ENCODE measurements at regions of chr3 and their contacts with region 1.

Region 1: DNA sequence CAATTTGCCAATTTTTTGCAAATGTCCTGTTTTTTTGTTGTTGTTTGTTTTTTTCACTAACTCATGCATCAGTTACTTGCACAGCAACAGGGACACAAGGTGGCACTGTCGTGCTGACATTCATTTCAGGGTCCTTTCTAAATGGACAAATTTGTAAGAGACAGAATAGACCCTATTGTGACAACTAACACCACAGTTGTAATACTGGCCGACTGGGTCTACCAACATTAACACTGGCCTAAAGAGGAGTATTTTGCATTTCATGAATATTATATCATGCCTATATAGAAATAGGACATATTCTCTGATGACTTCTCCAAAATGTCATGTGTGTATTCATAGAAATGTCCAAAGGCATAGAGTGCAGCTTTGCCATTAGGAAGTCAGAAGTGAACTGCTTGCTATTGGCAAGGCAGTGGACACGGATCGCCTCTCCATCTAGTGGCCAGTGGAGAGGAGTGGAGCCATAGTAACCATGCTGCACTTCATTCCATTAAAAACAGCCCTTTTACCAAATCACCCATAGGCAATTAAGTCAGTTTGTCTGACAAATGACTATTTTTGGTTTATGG is 54.8 kb downstream of the ZBTB20 start:
- DNase-seq: peak; percentile 66 to 67
- H3K4me3 ChIP-seq: no peak overlapping the region
- H3K4me1 ChIP-seq: peaks cover 10% of the 10 kb centered on the region
- H3K27me3 ChIP-seq: no peaks in the 10 kb centered on the region

Region 2: DNA sequence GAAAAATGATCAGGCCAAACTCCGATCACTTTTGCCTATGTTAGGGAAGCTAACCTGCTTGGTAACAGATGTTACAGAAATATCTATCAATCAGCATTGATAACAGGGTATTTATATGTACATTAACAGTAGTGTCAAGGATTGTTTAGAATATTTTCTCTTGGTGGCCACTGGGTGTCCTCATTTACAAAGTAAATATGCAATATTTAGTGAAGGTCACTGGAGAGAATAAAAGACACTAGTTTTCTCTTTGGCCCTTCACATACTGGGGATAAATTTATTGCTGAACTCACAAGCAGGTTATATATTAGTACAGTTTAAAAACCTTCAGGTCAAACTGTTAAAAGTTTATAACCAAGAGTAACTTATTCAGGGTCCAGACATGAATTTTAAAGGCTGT is 729.5 kb before region 1 on chr3:
- in situ Hi-C with region 1: loop called (anchors 25 kb)
- DNase-seq: peak in 1 of 2 experiments; percentile 79
- H3K4me3 ChIP-seq: no peak overlapping the region
- H3K4me1 ChIP-seq: peaks cover 15% of the 10 kb centered on the region
- H3K27me3 ChIP-seq: no peaks in the 10 kb centered on the region

Region 3: DNA sequence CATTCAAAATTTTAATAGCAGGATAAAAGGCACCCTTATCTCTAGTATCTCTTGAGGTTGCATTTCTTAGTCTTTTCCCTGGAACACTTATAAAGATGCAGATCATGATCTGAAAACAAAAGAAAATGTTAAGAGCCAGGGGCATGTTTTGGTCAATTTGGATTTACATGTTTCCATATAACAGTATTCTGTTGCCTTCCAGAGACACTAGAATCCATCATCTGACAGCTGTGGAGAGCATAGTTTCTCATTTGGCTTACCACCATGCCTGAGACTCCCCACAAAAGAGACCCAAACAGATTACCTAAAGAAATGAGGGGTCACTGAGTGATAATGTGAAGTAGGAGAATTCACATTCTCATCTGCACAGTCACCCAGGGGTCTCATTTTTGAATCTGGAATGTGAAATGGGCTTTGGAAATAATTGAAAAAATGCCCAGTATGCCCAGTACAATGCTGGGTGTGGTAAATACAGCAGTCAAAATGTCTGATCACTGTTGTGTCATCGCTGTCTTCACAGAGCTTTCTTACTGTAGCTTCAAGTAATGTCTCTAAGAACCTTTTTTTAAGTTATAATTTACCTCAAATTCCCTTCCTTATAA is 134.6 kb after region 1 on chr3:
- in situ Hi-C with region 1: no loop called
- DNase-seq: peak in 1 of 2 experiments; percentile 33
- H3K4me3 ChIP-seq: no peak overlapping the region
- H3K4me1 ChIP-seq: peaks cover 17% of the 10 kb centered on the region
- H3K27me3 ChIP-seq: no peaks in the 10 kb centered on the region

Region 4: DNA sequence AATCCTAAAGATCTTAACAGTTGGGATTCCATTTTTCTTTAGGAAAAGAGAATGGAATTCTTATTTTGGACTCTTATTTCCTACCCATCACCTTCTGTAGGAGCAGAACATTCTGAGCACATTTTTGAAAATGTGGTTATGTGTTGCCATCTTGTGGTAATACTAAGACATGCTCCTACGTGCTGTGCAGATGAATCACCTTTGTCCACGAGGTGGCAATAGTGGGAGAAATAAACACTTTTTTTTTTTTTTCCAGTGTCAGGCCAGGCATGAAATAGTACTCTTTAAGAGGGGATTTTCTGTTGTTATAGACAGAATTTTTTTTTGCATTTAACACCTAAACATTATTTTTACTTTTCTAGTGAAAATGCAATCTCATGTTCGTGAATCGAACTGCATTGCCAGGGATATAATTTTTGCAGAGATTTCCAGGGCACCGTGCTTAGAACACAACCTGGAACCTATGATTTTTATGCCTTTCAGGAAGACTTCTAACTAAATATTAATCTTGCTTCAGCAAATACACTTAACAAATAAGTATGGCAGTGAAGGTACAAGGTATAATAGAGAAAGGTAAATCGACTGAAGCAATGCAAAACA is 727.6 kb after region 1 on chr3:
- in situ Hi-C with region 1: loop called (anchors 25 kb)
- DNase-seq: peak; percentile 78 to 88
- H3K4me3 ChIP-seq: no peak overlapping the region
- H3K4me1 ChIP-seq: peaks cover 4% of the 10 kb centered on the region; the same call in 1 of the 2 replicates
- H3K27me3 ChIP-seq: no peaks in the 10 kb centered on the region

Measured in HAP-1 (cell line).